Activated T-helper 1 cell treated with anti-CD3 and anti-CD28 coated beads, Interleukin-12 subunit alpha, Interleukin-12 subunit beta, Interleukin-2, Interleukin-4 antibody, amounts not matched to agents 30 ng/mL and 10 ng/mL and 1 ng/mL, durations not matched to agents 14 hours and 24 hours and 36 hours (primary cell): ENCODE measurements at regions of chr19 and their contacts with region 1.

Region 1: GRCh38 chr19:45792470-45793177 is at the start of gene DMWD:
- DNase-seq: peak; percentile 99
- H3K4me3 Mint-ChIP-seq: peak within 1 kb of the TSS; percentile 89
- H3K27ac Mint-ChIP-seq: peak within 1 kb of the TSS; percentile 95
- H3K4me1 Mint-ChIP-seq: peaks cover 30% of the 10 kb centered on the region
- H3K27me3 Mint-ChIP-seq: peaks cover 52% of the 10 kb centered on the region
- total RNA-seq, gene DMWD: 50.0 and 55.8 TPM in 2 replicates

Region 2: GRCh38 chr19:45001087-45001739 is 791.4 kb before region 1 on chr19 and contains the start of gene RELB:
- intact Hi-C with region 1: loop called (anchors 2 kb)
- DNase-seq: peak; percentile 96
- H3K4me3 Mint-ChIP-seq: peak within 1 kb of the TSS; percentile 91
- H3K27ac Mint-ChIP-seq: peak within 1 kb of the TSS; percentile 97
- H3K4me1 Mint-ChIP-seq: peaks cover 11% of the 10 kb centered on the region
- H3K27me3 Mint-ChIP-seq: no peaks in the 10 kb centered on the region
- total RNA-seq, gene RELB: 73.3 and 77.5 TPM in 2 replicates

Region 3: GRCh38 chr19:45730389-45731288 is 62.0 kb before region 1 on chr19 and contains the start of gene FBXO46:
- intact Hi-C with region 1: loop called (anchors 2 kb)
- DNase-seq: peak; percentile 95
- H3K4me3 Mint-ChIP-seq: peak within 1 kb of the TSS; percentile 99
- H3K27ac Mint-ChIP-seq: peak within 1 kb of the TSS; percentile 85
- H3K4me1 Mint-ChIP-seq: peaks cover 26% of the 10 kb centered on the region
- H3K27me3 Mint-ChIP-seq: peaks cover 2% of the 10 kb centered on the region
- total RNA-seq, gene FBXO46: 35.1 and 35.4 TPM in 2 replicates

Region 4: DNA sequence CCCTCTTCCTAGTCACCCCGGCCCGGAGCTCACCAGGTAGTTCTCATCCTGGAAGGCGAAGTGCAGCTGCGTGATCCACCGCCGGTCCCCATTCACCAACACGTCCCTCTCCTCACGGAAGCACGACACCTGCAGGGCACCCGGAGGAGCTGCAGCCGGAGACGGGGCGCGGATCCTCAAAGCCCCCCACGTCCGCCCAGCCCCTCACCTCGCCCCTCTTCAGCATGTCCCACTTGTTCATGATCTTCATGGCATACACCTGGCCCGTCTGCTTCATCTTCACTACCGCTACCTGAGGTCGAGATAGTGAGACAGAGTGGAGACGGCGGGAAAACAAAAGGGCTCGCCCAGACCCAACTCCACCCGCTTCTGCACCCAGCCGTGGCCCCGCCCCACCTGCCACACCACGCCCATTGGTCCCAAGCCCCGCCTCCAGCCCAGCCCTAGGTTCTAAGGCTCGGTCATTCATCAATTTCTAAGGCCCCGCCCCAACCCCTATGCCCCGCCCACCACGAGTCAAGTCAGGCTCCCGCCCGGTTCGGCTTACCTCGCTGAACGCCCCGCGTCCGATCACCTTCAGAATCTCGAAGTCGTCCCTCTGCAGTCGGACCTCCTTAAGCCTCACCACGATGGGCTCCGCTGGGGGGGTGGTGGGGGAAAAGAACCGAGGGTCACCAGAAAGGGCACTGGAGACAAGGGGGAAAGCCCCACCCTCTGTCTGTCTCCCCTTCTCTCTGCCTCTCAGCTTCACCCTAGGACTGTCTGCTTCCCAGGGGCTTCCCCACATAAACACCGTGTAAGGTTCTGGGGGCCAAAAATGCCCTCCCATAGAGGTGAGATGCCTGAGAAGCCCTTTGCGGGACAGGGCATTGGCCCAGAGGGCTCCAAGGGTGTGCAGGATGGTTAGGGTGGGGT is 13.1 kb before region 1 on chr19:
- intact Hi-C with region 1: loop called (anchors 1 kb)
- DNase-seq: peak; percentile 83
- H3K4me3 Mint-ChIP-seq: peak overlapping the region; percentile 71
- H3K27ac Mint-ChIP-seq: peak overlapping the region; percentile 24
- H3K4me1 Mint-ChIP-seq: peaks cover 16% of the 10 kb centered on the region
- H3K27me3 Mint-ChIP-seq: peaks cover 20% of the 10 kb centered on the region

Region 5: GRCh38 chr19:45842198-45842597 is 49.6 kb after region 1 on chr19:
- intact Hi-C with region 1: no loop called
- DNase-seq: no peak
- H3K4me3 Mint-ChIP-seq: no peak overlapping the region
- H3K27ac Mint-ChIP-seq: no peak overlapping the region
- H3K4me1 Mint-ChIP-seq: no peaks in the 10 kb centered on the region
- H3K27me3 Mint-ChIP-seq: no peaks in the 10 kb centered on the region

Region 6: DNA sequence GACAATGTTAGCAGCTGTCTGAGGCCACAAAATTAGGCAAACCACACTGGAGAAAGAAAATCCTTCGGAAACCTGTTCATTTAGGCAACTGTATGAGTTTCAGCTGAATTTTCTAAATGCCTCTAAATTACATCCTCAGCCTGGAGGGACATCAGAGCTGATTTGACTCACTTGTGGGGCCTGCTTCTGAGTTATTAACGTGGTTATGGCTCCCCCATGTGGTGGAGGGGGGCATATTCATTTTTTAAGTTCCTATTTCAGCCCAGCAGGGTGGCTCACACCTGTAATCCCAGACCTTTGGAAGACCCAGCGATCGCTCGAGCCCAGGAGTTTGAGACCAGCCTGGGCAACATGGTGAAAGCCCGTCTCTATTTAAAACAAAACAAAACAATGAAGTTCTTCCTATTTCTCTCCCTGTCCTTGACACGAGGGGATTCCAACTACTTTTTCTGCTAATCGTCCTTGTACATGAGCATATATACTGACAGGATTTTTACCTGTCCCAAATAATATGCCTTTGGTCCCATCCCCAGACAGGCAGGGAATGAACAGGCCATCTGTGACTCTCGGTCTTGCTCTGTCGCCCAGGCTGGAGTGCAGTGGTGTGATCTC is 472.7 kb after region 1 on chr19:
- intact Hi-C with region 1: loop called (anchors 10 kb)
- DNase-seq: peak; percentile 61
- H3K4me3 Mint-ChIP-seq: no peak overlapping the region
- H3K27ac Mint-ChIP-seq: no peak overlapping the region
- H3K4me1 Mint-ChIP-seq: peaks cover 10% of the 10 kb centered on the region
- H3K27me3 Mint-ChIP-seq: peaks cover 58% of the 10 kb centered on the region